HepG2 (cell line): ENCODE measurements at regions of chr17 and their contacts with region 1.

Region 1: DNA sequence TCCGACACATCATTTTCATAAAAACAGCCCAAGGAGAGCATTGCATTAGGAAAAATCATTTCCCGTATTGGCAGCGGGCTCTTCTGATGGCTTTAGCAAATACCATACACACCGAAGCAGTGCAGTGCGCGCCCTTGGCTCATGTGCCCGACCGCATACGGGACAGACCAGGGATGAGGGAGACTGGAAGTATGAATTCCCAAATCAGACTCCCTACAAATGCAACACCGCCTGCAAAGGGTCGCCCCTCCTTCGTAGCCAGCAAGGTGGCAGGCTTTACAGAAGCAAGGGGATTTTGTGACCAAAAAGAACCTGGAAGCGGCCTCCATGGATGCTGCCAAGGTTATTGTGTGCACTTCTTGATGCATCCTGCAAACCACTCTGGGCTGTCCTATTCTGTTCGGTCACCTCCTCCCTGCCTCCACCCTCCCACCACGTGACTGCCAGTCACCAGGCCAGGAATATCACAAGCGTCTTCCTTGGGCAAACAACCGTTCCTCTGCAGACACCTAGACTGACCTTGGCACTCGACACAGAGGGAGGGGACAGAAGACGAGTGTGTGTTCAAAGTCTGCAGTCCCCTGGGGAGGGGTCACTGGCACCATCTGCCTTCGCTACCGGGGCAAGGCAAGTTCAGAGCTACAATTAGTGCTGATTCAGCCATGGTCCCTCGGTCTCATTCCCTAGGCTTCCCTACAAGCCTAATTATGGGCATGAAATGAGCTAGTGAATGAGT is 460.4 kb downstream of the SLC39A11 start:
- DNase-seq: peak; percentile 98
- ATAC-seq: peak; percentile 93
- H3K4me3 ChIP-seq: peak overlapping the region; percentile 41 to 68 (median 47)
- H3K27ac ChIP-seq: peak overlapping the region; percentile 51
- H3K4me1 ChIP-seq: peaks cover 56% of the 10 kb centered on the region
- H3K27me3 ChIP-seq: no peaks in the 10 kb centered on the region
- CTCF ChIP-seq: peak; percentile 70
- EP300 ChIP-seq: peak; percentile 79 to 96; a peak in 3 of 4 replicates
- POLR2A ChIP-seq: peak; percentile 49 to 74; a peak in 3 of 4 replicates
- RAD21 ChIP-seq: no peak; the same call in 1 of the 2 replicates

Region 2: DNA sequence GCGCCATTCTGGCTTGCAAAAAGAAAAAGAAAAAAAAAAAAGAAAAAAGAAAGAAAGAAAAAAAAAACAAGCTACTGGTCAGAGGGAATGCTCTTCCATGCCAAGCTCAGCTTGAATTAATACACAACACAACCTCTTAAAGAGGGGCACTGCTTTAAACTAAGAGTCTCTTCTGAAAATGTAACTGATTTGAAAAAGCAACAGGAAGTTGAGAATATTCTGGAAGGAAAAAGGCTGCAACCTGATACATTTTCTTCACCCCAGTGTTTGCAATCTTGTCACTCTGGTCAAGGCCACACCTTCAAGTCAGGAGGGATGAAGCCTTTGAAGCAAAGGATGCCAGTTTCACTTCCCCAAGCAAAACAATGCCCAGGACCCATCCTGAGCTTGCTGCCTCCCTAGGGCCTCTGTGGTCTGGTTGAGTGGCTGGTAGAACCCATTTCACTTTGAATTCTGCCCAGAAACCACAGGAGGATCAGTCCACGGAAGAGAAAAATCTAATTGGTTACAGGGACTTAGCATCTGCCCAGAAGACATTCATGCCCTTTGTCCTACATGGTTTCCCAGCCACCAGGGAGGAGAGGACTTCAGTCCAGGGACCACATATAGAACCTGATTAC is 121.6 kb before region 1 on chr17:
- CTCF ChIA-PET with region 1: no interaction called
- POLR2A ChIA-PET with region 1: no interaction called
- in situ Hi-C with region 1: no loop called
- intact Hi-C with region 1: no loop called
- DNase-seq: no peak
- ATAC-seq: peak; percentile 50
- H3K4me3 ChIP-seq: no peak overlapping the region
- H3K27ac ChIP-seq: no peak overlapping the region
- H3K4me1 ChIP-seq: peaks cover 67% of the 10 kb centered on the region
- H3K27me3 ChIP-seq: no peaks in the 10 kb centered on the region
- CTCF ChIP-seq: no peak
- EP300 ChIP-seq: no peak
- POLR2A ChIP-seq: no peak
- RAD21 ChIP-seq: no peak

Region 3: GRCh38 chr17:72580321-72581127 is 51.6 kb before region 1 on chr17:
- CTCF ChIA-PET with region 1: no interaction called
- POLR2A ChIA-PET with region 1: interaction called, 44 read pairs
- in situ Hi-C with region 1: no loop called
- intact Hi-C with region 1: no loop called
- DNase-seq: peak; percentile 100
- ATAC-seq: peak; percentile 92
- H3K4me3 ChIP-seq: peak overlapping the region in 1 of 3 experiments; percentile 20; a peak in 1 of 6 replicates
- H3K27ac ChIP-seq: peak overlapping the region; percentile 80
- H3K4me1 ChIP-seq: peaks cover 73% of the 10 kb centered on the region
- H3K27me3 ChIP-seq: no peaks in the 10 kb centered on the region
- CTCF ChIP-seq: no peak
- EP300 ChIP-seq: peak; percentile 95 to 97
- POLR2A ChIP-seq: peak in 1 of 2 experiments; percentile 30; a peak in 2 of 4 replicates
- RAD21 ChIP-seq: 0 out of 2 replicates have a peak, but pooled peaks have one; percentile 6

Region 4: GRCh38 chr17:72618001-72618509 is 14.1 kb before region 1 on chr17:
- CTCF ChIA-PET with region 1: no interaction called
- POLR2A ChIA-PET with region 1: interaction called, 46 read pairs
- in situ Hi-C with region 1: no loop called
- intact Hi-C with region 1: loop called (anchors 2 kb)
- DNase-seq: peak; percentile 92
- ATAC-seq: peak; percentile 70
- H3K4me3 ChIP-seq: peak overlapping the region; percentile 33 to 64 (median 40); a peak in 5 of 6 replicates
- H3K27ac ChIP-seq: no peak overlapping the region
- H3K4me1 ChIP-seq: peaks cover 71% of the 10 kb centered on the region
- H3K27me3 ChIP-seq: no peaks in the 10 kb centered on the region
- CTCF ChIP-seq: no peak
- EP300 ChIP-seq: peak in 1 of 2 experiments; percentile 65; a peak in 2 of 4 replicates
- POLR2A ChIP-seq: peak in 1 of 2 experiments; percentile 20; a peak in 1 of 4 replicates
- RAD21 ChIP-seq: no peak

Region 5: DNA sequence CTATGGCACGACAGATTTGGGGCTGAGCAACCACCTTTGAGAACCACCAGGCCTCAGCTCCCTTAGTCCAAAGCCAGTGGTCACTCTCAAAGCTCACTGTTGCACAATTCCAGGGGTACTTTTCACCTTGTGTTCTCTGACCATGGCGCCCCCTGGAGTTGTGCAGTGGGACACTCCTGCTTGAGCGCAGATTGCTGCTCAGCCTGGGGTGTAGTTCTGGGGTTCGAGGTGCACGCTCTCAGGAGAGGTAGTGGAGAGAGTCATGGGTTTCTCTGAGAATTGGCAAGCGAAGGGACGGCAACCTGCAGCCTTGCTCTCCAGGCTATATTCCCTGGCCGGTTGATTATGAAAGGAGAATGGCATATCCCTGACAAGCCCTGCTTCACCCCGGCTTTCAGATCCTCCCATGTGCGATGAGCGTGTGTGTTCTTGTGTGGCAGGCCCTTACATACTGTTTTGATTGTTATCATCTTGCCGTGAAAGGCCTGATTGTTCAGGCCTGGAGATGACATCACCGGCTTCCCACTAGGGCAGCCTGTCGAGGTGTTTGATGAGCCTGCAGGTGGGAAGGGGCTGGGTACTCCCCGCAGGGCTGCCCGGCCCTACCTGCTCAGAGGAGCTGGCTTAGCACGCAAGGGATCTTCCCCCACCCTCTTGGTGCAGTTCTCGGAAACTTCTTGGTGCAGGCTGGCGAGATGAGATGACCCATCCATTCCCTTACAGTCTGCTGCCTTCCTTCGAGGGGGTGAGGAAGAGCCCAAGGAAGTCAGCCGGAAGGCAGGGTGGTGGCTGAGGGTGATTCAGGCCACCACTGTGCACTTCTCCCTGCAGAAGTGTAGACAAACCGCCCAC is 29.2 kb after region 1 on chr17:
- CTCF ChIA-PET with region 1: no interaction called
- POLR2A ChIA-PET with region 1: interaction called, 18 read pairs
- in situ Hi-C with region 1: no loop called
- intact Hi-C with region 1: no loop called
- DNase-seq: peak; percentile 98
- ATAC-seq: peak; percentile 89
- H3K4me3 ChIP-seq: peak overlapping the region in 1 of 3 experiments; percentile 36; a peak in 2 of 6 replicates
- H3K27ac ChIP-seq: peak overlapping the region; percentile 50
- H3K4me1 ChIP-seq: peaks cover 37% of the 10 kb centered on the region
- H3K27me3 ChIP-seq: no peaks in the 10 kb centered on the region
- CTCF ChIP-seq: peak; percentile 78
- EP300 ChIP-seq: peak in 1 of 2 experiments; percentile 78; a peak in 3 of 4 replicates
- POLR2A ChIP-seq: 0 out of 4 replicates have a peak, but pooled peaks of 1 of the 2 experiments have one; percentile 29
- RAD21 ChIP-seq: peak; percentile 46; the same call in 1 of the 2 replicates

Region 6: DNA sequence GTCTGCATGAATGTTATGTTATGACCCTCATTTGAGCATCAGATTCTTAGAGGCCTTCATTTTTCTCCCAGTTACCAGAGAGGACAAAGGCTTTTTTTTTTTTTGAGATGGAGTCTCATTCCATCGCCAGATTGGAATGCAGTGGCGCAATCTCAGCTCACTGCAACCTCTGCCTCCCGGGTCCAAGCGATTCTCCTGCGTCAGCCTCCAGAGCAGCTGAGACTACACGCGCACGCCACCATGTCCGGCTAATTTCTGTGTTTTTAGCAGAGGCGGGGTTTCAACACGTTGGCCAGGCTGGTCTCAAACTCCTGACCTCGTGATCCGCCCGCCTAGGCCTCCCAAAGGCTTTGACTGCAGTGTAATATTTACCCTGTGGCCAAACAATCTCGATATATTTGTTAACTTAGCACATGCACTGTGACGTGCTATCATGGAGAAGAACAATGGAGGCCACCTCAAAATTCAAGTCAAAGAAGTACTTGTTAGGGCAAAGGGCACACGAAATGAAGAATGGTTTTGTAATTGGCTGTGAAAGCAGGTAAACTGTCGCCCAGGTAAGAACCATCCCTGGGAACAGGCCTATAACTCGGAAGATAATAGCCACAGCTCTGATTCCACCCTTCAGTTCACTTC is 157.0 kb after region 1 on chr17:
- CTCF ChIA-PET with region 1: no interaction called
- POLR2A ChIA-PET with region 1: no interaction called
- in situ Hi-C with region 1: no loop called
- intact Hi-C with region 1: no loop called
- DNase-seq: peak; percentile 85
- ATAC-seq: peak; percentile 87
- H3K4me3 ChIP-seq: no peak overlapping the region
- H3K27ac ChIP-seq: peak overlapping the region; percentile 37
- H3K4me1 ChIP-seq: peaks cover 31% of the 10 kb centered on the region
- H3K27me3 ChIP-seq: no peaks in the 10 kb centered on the region
- CTCF ChIP-seq: no peak
- EP300 ChIP-seq: peak in 1 of 2 experiments; percentile 28; a peak in 1 of 4 replicates
- POLR2A ChIP-seq: no peak
- RAD21 ChIP-seq: no peak